ENCODE measurements at regions of chr4 and their contacts with region 1.

Region 1: DNA sequence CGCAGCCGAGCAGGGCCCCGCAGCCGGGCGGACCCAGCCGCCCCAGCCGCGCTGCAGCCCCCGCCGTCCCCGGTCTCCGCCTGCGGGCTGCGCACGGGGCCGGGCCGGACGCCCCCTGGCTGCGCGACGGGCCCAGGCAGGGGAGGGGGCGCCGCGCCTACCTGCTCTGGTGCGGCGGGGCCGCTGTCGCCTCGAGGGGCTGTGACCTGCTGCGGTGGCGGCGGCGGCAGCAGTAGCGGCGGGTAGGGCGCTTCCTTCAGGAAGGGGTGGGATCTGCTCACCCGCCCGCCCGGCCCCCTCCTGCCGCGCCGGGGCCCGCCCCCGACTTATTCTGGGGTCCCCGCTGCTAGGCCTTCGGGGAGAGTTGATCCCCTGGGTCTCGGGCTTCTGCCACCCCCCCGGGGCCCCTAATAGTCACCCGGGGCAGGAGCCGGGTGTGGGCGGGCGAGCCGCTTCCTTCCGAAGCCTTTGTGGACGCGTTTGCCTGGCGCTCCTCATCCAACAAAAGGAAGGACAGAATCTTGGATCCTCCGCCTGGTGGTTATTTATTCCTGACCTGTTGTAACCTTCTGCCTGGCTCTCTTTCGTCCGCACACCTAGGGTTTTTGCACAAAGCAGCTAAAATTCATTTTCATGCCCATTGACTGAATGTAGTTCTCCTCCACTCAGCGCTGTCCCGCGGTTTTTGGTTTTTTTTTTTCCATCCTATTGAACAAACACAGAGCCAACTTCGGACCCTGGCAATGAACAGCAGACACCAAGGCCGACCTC is at the start of gene TMEM150C:
- DNase-seq: peak; percentile 34 to 62
- ATAC-seq: peak; percentile 76 to 92 (median 85)
- H3K4me3 ChIP-seq: peak within 1 kb of the TSS; percentile 62 to 91 (median 72)
- H3K27ac ChIP-seq: peak within 1 kb of the TSS in 9 of 10 donors; percentile 65 to 85 (median 74)
- H3K4me1 ChIP-seq: peaks cover 0 to 26% (median 11%) of the 10 kb centered on the region in 9 donors
- H3K27me3 ChIP-seq: peaks cover 0 to 41% (median 0%) of the 10 kb centered on the region in 7 donors
- CTCF ChIP-seq: peak in 7 of 9 donors; percentile 5 to 51 (median 24)
- total RNA-seq, gene TMEM150C: 8.5 to 22.7 (median 12.6) TPM

Region 2: GRCh38 chr4:82624819-82625218 is 62.9 kb after region 1 on chr4:
- intact Hi-C with region 1: loop called in 1 of 10 experiments (anchors 2 kb)
- DNase-seq: no peak
- ATAC-seq: no peak
- H3K4me3 ChIP-seq: no peak overlapping the region
- H3K27ac ChIP-seq: peak overlapping the region in 7 of 10 donors; percentile 52 to 88 (median 76)
- H3K4me1 ChIP-seq: peaks cover 0 to 53% (median 16%) of the 10 kb centered on the region in 9 donors
- H3K27me3 ChIP-seq: no peaks in the 10 kb centered on the region
- CTCF ChIP-seq: no peak

Measured in heart right ventricle (tissue), 16 donors.